IMR-90 (cell line): ENCODE measurements at regions of chr3 and their contacts with region 1.

Region 1: DNA sequence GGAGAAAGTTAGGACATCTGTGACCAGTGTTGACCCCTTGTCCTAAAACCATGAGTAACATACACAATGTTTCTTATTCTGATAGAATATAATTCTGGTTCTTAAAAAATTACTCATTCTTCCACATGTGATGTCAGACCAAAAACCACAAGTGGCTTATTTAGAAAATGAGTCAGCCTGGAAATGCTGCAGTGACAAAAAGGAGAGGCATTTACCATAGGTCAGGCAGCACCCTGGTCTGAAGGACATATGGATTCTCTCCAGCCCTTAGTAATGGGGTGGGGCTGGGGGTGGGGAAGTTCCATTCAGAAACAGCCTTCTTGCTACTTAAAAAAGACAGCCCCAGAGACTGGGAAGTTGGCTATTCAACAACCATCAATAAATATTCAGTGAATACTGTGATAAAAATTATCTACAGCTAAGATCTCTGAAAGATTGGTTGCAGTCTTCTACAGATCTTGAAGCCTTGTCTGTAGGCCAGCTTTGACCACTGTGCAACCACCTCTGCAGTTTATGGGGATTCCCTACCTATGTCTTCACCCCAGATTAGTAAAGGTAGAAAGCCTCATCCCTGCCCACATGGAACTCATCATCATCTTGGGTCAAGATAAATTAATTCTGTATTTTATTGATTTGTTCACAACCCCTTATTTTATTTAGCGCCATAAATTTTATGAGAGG is 34.9 kb upstream of the TIMP4 start:
- DNase-seq: peak; percentile 100
- ATAC-seq: peak; percentile 88
- H3K4me3 ChIP-seq: no peak overlapping the region
- H3K27ac ChIP-seq: peak overlapping the region; percentile 95
- H3K4me1 ChIP-seq: peaks cover 28% of the 10 kb centered on the region
- H3K27me3 ChIP-seq: no peaks in the 10 kb centered on the region
- CTCF ChIP-seq: no peak
- POLR2A ChIP-seq: no peak
- RAD21 ChIP-seq: no peak

Region 2: GRCh38 chr3:12253561-12254343 is 60.1 kb after region 1 on chr3:
- CTCF ChIA-PET with region 1: no interaction called
- POLR2A ChIA-PET with region 1: no interaction called
- dilution Hi-C with region 1: no loop called
- in situ Hi-C with region 1: no loop called
- intact Hi-C with region 1: no loop called
- DNase-seq: peak; percentile 44
- ATAC-seq: peak; percentile 24
- H3K4me3 ChIP-seq: no peak overlapping the region
- H3K27ac ChIP-seq: no peak overlapping the region
- H3K4me1 ChIP-seq: no peaks in the 10 kb centered on the region; the same call in 1 of the 2 replicates
- H3K27me3 ChIP-seq: peaks cover 1% of the 10 kb centered on the region; the same call in 1 of the 2 replicates
- CTCF ChIP-seq: no peak
- POLR2A ChIP-seq: no peak
- RAD21 ChIP-seq: no peak

Region 3: DNA sequence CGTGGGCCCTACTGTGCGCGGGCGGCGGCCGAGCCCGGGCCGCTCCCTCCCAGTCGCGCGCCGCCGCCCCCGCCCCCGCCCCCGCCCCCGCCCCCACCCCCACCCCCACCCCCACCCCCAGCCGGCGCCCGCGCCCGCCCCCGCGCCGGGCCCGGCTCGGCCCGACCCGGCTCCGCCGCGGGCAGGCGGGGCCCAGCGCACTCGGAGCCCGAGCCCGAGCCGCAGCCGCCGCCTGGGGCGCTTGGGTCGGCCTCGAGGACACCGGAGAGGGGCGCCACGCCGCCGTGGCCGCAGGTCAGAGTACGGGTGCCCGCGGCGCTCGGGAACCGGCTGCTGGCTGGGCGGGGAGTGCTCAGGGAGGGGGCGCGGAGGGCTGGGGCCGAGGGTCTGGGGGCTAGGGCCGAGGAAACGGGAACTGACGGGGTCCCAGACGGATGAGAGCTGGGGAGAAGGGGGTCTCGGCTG is 94.1 kb after region 1 on chr3:
- CTCF ChIA-PET with region 1: no interaction called
- POLR2A ChIA-PET with region 1: no interaction called
- dilution Hi-C with region 1: no loop called
- in situ Hi-C with region 1: no loop called
- intact Hi-C with region 1: loop called (anchors 5 kb)
- DNase-seq: no peak
- ATAC-seq: peak; percentile 87
- H3K4me3 ChIP-seq: peak overlapping the region; percentile 95
- H3K27ac ChIP-seq: peak overlapping the region; percentile 50
- H3K4me1 ChIP-seq: peaks cover 2% of the 10 kb centered on the region
- H3K27me3 ChIP-seq: no peaks in the 10 kb centered on the region
- CTCF ChIP-seq: no peak
- POLR2A ChIP-seq: no peak
- RAD21 ChIP-seq: peak; percentile 38

Region 4: DNA sequence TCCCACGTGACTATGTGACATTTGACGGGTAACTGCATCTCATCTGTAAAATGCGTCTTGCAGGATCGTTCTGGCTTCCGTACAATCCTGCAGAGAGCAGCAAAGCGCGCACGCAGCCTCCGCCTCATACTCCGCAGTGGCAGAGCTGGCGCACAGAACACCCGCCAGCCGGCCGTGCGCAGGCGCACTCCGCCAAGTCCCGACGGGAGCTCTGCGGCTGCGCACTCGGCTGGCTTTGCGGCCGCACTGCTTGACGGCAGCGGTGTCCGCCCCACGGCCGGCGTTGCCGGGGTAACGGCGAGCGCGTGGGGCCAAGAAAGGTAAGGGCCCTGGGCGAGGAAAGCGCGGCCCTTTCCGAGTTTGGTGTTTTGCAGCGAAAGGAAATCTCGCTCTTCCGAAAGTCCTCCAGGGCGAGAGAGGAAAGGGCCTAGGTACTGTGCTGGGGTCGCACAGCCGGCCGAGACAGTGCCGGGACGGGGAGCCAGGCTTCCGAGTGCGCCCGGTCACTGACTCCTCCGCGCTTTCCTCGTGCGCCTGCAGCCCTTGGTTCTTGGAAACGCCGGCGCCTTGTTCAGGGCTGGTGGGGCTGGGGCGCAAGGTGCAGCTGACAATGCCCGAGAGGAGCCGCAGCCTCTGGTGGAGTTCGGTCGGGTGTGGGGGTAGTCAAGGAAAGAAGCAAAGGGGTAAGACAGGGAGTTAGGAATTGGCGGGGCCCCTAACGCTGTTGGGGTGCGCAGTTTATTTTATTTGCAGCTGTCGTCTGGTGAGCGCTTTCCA is 290.8 kb after region 1 on chr3 and contains the start of gene TSEN2:
- CTCF ChIA-PET with region 1: no interaction called
- POLR2A ChIA-PET with region 1: no interaction called
- dilution Hi-C with region 1: no loop called
- in situ Hi-C with region 1: no loop called
- intact Hi-C with region 1: loop called (anchors 5 kb)
- DNase-seq: peak; percentile 94
- ATAC-seq: peak; percentile 96
- H3K4me3 ChIP-seq: peak within 1 kb of the TSS; percentile 78
- H3K27ac ChIP-seq: peak within 1 kb of the TSS; percentile 76
- H3K4me1 ChIP-seq: no peaks in the 10 kb centered on the region; the same call in 1 of the 2 replicates
- H3K27me3 ChIP-seq: no peaks in the 10 kb centered on the region
- CTCF ChIP-seq: peak; percentile 47
- POLR2A ChIP-seq: no peak
- RAD21 ChIP-seq: peak; percentile 54
- total RNA-seq, gene TSEN2: 14.2 and 15.0 TPM in 2 replicates

Region 5: GRCh38 chr3:12556671-12557472 is 363.2 kb after region 1 on chr3 and contains the start of gene MKRN2:
- CTCF ChIA-PET with region 1: no interaction called
- POLR2A ChIA-PET with region 1: no interaction called
- dilution Hi-C with region 1: no loop called
- in situ Hi-C with region 1: no loop called
- intact Hi-C with region 1: loop called (anchors 5 kb)
- DNase-seq: peak; percentile 78
- ATAC-seq: peak; percentile 93
- H3K4me3 ChIP-seq: peak within 1 kb of the TSS; percentile 85
- H3K27ac ChIP-seq: peak within 1 kb of the TSS; percentile 91
- H3K4me1 ChIP-seq: peaks cover 5% of the 10 kb centered on the region
- H3K27me3 ChIP-seq: no peaks in the 10 kb centered on the region
- CTCF ChIP-seq: no peak
- POLR2A ChIP-seq: peak; percentile 93
- RAD21 ChIP-seq: no peak; the same call in 1 of the 2 replicates
- total RNA-seq, gene MKRN2: 65.6 and 65.8 TPM in 2 replicates